ENCODE measurements at regions of chr10 and their contacts with region 1.

Region 1: DNA sequence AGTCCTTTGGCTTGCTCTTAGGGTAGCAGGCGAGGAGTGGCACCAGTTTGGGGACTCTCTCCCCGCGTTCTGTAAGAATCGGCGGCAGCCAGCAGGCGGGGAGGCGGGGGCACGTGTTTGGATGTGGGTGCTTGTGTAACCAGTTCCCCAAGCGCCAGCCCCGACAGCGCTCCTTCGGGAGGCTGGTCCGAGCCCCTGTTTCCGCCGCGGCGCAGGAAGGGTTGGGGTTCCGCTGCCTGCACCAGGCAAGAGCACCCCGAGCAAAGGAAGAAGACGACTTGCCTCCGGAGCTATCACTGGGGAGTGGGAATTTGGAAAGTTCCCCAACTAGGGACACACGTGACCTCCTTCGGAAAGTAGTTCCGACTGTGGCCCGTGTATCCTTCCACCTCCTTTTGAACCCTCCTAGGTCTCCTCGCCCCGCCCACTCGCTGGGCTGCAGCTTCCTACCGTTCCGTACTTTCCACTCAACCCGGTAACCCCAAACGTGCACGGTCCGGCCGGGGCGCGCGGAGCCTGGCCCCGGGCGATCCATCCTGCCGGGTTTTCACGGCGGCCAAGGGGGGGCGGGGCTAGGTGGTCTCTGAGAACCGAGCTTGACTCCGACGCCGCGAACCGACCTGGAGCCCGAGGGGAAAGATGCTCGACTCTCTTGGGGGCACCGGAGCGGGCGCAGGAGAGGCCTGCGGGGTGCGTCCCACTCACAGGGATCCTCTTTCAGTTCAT is 1.2 kb downstream of the KLLN start:
- DNase-seq: peak; percentile 83
- H3K4me3 ChIP-seq: peak overlapping the region; percentile 91
- CTCF ChIP-seq: peak; percentile 11

Region 2: DNA sequence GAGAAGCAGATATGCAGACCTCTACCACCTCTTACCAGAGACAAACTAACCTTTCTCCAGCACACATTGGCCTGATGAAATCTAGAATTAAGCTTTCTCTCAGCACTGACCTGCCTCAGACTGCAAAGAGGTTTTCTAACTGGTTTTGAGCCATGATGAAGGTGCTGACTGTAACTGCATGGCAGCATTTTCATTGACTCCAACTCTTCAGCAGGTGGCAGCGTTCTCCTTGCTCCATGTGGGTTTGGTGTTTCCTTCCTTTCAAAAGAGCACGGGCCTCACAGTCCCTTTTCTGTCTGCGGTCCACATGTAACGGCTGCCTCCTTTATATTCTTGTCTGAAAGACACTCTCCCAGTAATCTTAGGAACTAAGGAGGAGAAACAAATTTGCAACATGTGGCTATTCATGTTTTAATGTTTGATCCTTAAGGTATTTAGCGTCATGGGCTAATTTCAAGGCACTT is 11.3 kb before region 1 on chr10:
- CTCF ChIA-PET with region 1: interaction called, 78 read pairs
- POLR2A ChIA-PET with region 1: interaction called, 6 read pairs
- DNase-seq: no peak
- H3K4me3 ChIP-seq: no peak overlapping the region
- CTCF ChIP-seq: peak; percentile 65

Region 3: DNA sequence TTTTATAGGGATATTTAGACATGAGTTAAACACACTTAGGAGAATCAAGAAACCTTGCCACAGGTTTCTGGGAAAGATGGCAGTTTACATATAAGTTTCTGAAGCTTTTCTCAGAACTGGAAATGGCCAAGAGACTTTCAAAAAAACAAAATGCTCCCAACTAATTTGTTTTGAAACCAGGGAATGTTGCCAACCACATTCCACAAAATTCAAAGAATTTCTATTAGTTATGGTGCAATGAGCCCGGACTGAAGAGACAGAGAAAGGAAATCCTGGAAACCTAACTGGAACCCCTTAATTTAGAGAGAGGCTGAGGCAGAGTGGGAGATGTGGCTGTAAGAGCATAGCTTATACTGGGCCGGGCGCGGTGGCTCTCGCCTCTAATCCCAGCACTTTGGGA is 129.8 kb after region 1 on chr10:
- CTCF ChIA-PET with region 1: no interaction called
- POLR2A ChIA-PET with region 1: no interaction called
- DNase-seq: no peak
- H3K4me3 ChIP-seq: no peak overlapping the region
- CTCF ChIP-seq: no peak

Region 4: GRCh38 chr10:88114368-88114767 is 252.3 kb after region 1 on chr10:
- CTCF ChIA-PET with region 1: interaction called, 10 read pairs
- POLR2A ChIA-PET with region 1: interaction called, 4 read pairs
- DNase-seq: no peak
- H3K4me3 ChIP-seq: no peak overlapping the region
- CTCF ChIP-seq: peak; percentile 31

Measured in AG04449 (cell line).